Caco-2 (cell line): ENCODE measurements at regions of chr15 and their contacts with region 1.

Region 1: GRCh38 chr15:84955089-84955848 is 26.4 kb upstream of the PDE8A start:
- DNase-seq: peak; percentile 81 to 82
- H3K4me3 ChIP-seq: peak overlapping the region; percentile 19; the same call in 1 of the 2 replicates
- H3K4me3 Mint-ChIP-seq: peak overlapping the region; percentile 39
- H3K27ac Mint-ChIP-seq: no peak overlapping the region
- H3K4me1 ChIP-seq: peaks cover 18% of the 10 kb centered on the region
- H3K4me1 Mint-ChIP-seq: peaks cover 7% of the 10 kb centered on the region
- H3K27me3 ChIP-seq: no peaks in the 10 kb centered on the region; the same call in 1 of the 2 replicates
- H3K27me3 Mint-ChIP-seq: no peaks in the 10 kb centered on the region
- CTCF ChIP-seq: peak; percentile 79 to 92

Region 2: GRCh38 chr15:84967380-84967779 is 12.1 kb after region 1 on chr15:
- CTCF ChIA-PET with region 1: no interaction called
- POLR2A ChIA-PET with region 1: no interaction called
- intact Hi-C with region 1: no loop called
- DNase-seq: no peak
- H3K4me3 ChIP-seq: no peak overlapping the region
- H3K4me3 Mint-ChIP-seq: no peak overlapping the region
- H3K27ac Mint-ChIP-seq: peak overlapping the region; percentile 59
- H3K4me1 ChIP-seq: no peaks in the 10 kb centered on the region
- H3K4me1 Mint-ChIP-seq: peaks cover 3% of the 10 kb centered on the region
- H3K27me3 ChIP-seq: no peaks in the 10 kb centered on the region
- H3K27me3 Mint-ChIP-seq: no peaks in the 10 kb centered on the region
- CTCF ChIP-seq: no peak

Region 3: GRCh38 chr15:84981054-84981710 is 25.9 kb after region 1 on chr15:
- CTCF ChIA-PET with region 1: interaction called, 6 read pairs
- POLR2A ChIA-PET with region 1: no interaction called
- intact Hi-C with region 1: loop called (anchors 1 kb)
- DNase-seq: peak; percentile 93 to 98
- H3K4me3 ChIP-seq: peak overlapping the region; percentile 86
- H3K4me3 Mint-ChIP-seq: peak overlapping the region; percentile 92
- H3K27ac Mint-ChIP-seq: peak overlapping the region; percentile 91
- H3K4me1 ChIP-seq: 0 out of 2 replicates have a peak, but pooled peaks cover 8% of the 10 kb centered on the region
- H3K4me1 Mint-ChIP-seq: no peaks in the 10 kb centered on the region
- H3K27me3 ChIP-seq: no peaks in the 10 kb centered on the region
- H3K27me3 Mint-ChIP-seq: no peaks in the 10 kb centered on the region
- CTCF ChIP-seq: peak; percentile 6 to 27

Region 4: DNA sequence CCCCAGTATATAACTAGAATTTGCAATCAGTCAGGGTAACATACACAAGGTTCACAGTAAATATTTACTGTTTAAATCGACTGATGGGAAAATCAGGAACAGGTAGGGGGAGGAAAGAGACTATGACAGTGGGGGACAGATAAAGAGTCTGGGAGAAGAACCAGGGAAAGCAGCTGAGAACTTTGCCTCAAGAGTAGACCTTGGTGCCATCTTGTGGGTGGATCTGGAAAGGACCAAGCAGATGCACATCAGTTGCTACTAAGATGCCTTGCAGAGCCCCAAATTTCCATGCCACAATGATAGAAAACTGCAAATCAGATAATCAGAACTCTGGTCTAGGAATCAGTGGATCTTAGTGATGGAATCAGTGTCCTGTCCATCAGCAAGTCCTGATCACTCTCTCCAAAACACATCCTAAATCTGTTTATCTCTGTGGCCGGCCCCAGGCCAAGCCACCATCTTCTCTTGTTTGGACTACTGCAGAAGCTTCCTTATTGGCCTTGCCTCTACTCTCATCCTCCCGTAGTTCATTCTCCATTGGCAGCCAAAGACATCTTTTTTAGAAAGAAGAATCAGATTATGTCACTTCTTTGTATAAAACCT is 89.1 kb after region 1 on chr15:
- CTCF ChIA-PET with region 1: interaction called, 11 read pairs
- POLR2A ChIA-PET with region 1: no interaction called
- intact Hi-C with region 1: loop called (anchors 1 kb)
- DNase-seq: peak; percentile 45 to 49
- H3K4me3 ChIP-seq: no peak overlapping the region
- H3K4me3 Mint-ChIP-seq: no peak overlapping the region
- H3K27ac Mint-ChIP-seq: no peak overlapping the region
- H3K4me1 ChIP-seq: peaks cover 16% of the 10 kb centered on the region
- H3K4me1 Mint-ChIP-seq: no peaks in the 10 kb centered on the region
- H3K27me3 ChIP-seq: no peaks in the 10 kb centered on the region
- H3K27me3 Mint-ChIP-seq: no peaks in the 10 kb centered on the region
- CTCF ChIP-seq: peak; percentile 46 to 59